Left cardiac atrium (tissue), 4 donors: ENCODE measurements at regions of chr15 and their contacts with region 1.

Region 1: GRCh38 chr15:92521624-92522008 is 127.9 kb downstream of the ST8SIA2 start:
- DNase-seq: peak; percentile 78
- ATAC-seq: peak; percentile 94 to 98

Region 2: DNA sequence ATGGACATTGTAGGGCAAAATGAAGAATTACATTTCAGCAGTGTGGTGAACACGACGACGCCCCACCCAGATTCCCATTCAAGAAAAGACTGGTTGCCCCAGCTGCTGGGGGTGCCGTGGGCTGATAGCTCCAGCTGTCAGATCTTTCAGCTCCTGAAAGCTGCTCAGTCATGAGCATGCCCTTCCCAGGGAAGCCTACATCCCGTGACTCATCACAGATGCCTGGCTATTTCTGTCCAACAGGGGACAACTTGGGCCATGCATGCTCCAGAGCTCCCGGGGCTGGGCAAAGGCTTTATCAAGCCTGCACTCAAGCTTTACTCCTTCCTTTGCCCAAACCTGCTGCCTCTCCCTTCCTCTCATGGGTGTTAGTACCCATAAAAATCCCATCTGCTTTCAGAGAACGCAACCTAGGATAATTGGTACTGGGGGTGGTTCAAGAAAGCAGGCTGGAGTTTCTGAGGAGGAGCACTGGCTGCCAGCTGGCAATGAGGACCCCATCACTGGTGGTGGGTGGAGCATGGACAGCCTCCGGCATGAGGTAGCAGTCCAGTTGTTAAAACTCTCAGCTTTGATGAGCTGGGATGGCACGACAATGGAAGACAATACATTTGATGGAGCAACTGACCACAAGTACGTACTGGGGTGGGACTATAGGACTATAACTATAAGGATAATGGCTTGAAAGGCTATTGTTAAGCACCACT is 144.4 kb before region 1 on chr15:
- intact Hi-C with region 1: no loop called
- DNase-seq: peak; percentile 29
- ATAC-seq: peak; percentile 92 to 96

Region 3: DNA sequence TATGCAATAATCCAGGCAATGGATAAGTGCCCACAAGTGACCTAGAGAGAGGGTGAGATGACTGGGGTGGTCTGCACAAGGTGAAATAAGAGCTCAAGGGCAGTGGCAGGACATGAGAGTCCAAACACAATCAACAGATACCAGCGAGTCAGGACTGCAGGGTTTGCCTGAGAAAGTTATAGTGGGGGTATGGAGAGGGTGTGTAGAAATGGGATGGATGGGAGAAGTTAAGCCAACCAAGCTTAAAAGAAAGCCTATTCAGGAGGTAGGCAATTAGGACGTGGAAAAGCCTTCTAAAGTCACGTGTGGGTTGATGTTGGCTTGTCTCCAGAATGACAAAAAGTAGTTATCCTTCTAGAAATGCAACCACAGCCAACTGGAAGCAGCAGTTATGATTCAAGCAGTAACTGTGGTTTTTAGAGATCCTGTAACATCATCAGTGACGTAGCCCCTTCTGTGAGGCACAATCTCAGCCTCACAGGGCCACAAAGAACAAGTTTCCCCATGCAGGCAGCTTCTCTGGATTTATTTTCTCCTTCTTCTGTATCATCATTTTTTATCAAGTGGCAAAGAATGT is 77.9 kb after region 1 on chr15:
- intact Hi-C with region 1: loop called in 1 of 2 experiments (anchors 5 kb)
- DNase-seq: no peak
- ATAC-seq: no peak

Region 4: GRCh38 chr15:92683232-92683834 is 161.7 kb after region 1 on chr15:
- intact Hi-C with region 1: loop called (anchors 1 to 5 kb)
- DNase-seq: no peak
- ATAC-seq: peak; percentile 50 to 69

Region 5: GRCh38 chr15:92715758-92716157 is 194.1 kb after region 1 on chr15:
- intact Hi-C with region 1: loop called in 1 of 2 experiments (anchors 2 kb)
- DNase-seq: no peak
- ATAC-seq: no peak